ENCODE measurements at regions of chr6 and their contacts with region 1.

Region 1: GRCh38 chr6:83067448-83068413 is at the start of gene DOP1A:
- DNase-seq: peak; percentile 88 to 97 (median 95)
- H3K4me3 ChIP-seq: peak within 1 kb of the TSS; percentile 61 to 100 (median 90)
- H3K27ac ChIP-seq: peak within 1 kb of the TSS in 57 of 59 donors; percentile 37 to 95 (median 85)
- H3K27me3 ChIP-seq: no peaks in the 10 kb centered on the region
- CTCF ChIP-seq: peak; percentile 50 to 100 (median 99)
- total RNA-seq, gene DOP1A: 31.4 to 72.1 (median 53.8) TPM

Region 2: DNA sequence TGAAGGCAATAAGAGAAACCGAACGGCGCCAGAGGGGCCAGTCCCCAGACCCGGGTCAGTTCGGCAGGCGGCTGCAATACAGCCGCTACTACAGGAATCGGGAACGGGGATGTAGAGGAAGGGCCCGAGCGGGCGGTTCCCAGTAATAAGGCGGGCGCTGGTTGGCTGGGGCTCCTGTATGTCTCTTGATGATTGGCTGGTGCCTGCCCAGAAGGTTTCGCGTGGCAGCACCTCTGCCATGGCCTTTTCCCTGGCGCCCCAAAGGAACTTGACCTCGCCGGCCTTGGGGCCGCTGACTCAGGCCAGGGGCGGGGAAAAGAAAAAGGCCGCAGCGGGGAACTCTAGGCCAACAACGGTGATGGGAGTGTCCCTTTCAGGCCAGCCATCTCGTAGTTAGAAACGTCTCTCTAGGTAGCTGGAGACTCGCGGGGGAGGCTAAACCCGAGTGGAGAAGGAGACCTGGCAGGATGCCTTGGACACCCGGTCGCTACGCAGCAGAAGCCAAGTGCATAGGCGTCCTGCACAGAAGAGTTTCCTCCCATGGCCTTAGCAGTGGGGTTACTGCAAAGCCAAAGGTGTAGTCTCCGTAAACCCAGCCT is 820.0 kb before region 1 on chr6 and contains the start of gene IBTK:
- intact Hi-C with region 1: loop called (anchors 5 kb)
- DNase-seq: peak; percentile 93 to 98 (median 96)
- H3K4me3 ChIP-seq: peak within 1 kb of the TSS; percentile 60 to 96 (median 88)
- H3K27ac ChIP-seq: peak within 1 kb of the TSS; percentile 40 to 99 (median 96)
- H3K27me3 ChIP-seq: no peaks in the 10 kb centered on the region
- CTCF ChIP-seq: peak in 18 of 56 donors; percentile 7 to 43 (median 28)
- total RNA-seq, gene IBTK: 24.8 to 47.0 (median 36.3) TPM

Region 3: DNA sequence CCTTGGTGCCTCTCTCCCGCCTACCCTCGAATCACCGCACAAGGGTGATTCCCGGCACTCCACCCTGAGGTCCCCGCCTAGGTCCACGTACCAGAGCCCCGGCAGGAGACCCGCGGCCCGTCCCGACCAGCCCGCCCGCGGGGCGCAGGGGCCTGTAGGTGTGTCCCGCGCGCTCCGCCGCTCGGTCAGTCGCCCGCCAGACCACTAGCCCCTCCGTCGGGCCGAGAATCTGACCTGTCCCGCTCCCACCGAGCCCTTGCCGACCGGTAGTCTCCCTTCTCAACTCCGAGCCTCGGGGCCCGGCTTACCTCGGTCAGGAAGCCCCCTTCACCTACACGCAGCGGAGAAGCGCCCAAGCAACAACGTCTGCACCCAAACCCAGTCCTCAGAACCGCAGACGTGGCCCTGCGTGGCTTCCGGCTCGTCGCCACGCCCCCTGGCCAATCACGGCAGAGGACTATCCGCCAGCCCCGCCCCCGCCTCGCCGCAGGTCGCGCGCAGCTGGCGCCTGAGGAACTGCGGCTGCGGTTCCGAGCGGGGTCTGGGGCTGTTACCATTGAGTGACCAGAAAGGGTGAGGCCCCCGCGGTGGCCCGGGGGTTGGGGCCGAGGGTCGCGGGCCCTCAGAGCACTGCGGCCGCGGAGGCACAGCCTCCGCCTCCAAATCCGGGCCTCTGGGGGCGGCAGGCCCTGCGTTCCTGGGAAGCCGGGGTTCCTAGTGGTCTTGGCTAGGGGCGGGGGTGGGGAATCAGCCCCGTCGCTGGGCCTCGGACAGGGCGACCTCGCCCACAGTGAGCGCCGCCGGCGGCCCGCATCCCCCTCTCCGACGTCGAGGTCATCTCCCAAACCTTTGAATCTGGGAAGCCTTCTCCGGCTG is 125.4 kb after region 1 on chr6 and contains the starts of genes PGM3 and RWDD2A:
- intact Hi-C with region 1: loop called (anchors 5 kb)
- DNase-seq: peak; percentile 85 to 96 (median 91)
- H3K4me3 ChIP-seq: peak within 1 kb of the TSS; percentile 70 to 99 (median 92)
- H3K27ac ChIP-seq: peak within 1 kb of the TSS in 58 of 59 donors; percentile 32 to 93 (median 86)
- H3K27me3 ChIP-seq: no peaks in the 10 kb centered on the region
- CTCF ChIP-seq: peak in 30 of 56 donors; percentile 6 to 54 (median 26)
- total RNA-seq, gene PGM3: 23.6 to 72.4 (median 42.1) TPM
- total RNA-seq, gene RWDD2A: 6.5 to 17.7 (median 12.6) TPM

Region 4: DNA sequence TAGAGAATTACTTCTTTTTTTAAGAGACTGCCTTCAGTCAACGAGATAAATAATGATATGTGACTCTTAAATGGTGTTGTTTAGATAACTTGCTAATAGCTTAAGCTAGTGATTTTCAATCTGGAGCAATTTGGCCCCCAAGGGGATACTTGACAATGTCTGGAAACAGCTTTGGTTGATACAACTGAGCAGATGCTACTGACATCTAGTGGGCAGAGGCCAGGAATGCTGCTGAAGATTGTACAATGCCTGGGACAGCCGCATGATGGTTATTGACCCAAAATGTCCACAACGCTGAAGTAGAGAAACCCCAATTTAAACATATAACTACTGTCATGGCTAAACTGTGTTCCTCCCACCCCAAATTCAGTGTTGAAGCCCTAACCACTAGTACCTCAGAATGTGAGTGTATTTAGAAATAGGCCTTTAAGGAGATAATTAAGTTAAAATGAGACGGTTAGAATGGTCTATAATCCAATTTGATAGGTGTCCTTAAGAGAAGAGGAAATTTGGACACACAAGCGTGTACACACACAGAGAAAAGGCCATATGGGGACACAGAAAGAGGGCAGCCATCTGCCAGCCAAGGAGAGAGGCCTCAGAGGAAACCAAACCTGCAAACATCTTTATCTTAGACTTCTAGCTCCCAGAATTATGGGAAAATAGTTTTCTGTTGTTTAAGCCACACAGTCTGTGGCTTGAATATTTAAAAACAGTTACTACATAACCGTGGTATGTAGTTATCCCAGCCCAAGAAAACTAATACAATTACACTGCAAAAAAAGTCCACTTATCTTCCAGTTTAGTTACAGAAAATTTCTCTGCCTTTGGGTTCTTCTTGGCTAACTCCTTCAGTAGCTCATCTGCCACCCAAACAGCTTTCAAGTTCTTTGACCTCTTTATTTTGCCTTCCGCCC is 147.7 kb after region 1 on chr6:
- intact Hi-C with region 1: loop called (anchors 1 to 2 kb)
- DNase-seq: peak; percentile 25 to 87 (median 64)
- H3K4me3 ChIP-seq: no peak overlapping the region
- H3K27ac ChIP-seq: peak overlapping the region in 3 of 59 donors; percentile 7 to 64 (median 16)
- H3K27me3 ChIP-seq: no peaks in the 10 kb centered on the region
- CTCF ChIP-seq: peak; percentile 45 to 90 (median 84)

Region 5: DNA sequence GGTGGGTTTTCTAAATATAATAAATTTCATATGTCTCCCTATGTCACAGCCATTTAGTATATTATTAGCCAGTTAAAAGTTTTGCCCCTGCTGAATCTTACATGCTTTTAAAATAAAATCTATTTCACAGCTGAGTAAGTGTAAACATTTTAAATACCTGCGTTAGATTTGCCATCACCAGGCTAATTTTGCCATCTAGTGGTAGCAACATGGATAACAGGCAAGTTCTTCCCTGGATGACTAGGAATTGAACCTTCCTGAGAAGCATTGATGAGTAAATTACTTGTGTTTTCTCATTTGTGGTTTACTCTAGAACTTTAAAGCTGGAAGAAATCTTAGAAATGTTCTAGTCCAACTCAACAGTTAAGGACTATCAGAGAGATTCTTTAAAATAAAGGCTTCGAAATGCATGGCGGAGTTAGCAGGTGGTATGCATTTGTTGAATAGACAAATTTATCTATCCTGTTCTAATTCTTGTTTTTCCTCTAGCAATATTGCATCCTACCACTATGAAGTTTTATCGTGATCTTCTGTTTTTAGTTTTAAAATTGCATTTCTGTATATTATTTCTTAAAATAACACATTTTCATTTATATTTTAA is 447.2 kb after region 1 on chr6:
- intact Hi-C with region 1: loop called (anchors 2 kb)
- DNase-seq: peak in 2 of 10 donors; percentile 13 to 29
- H3K4me3 ChIP-seq: no peak overlapping the region
- H3K27ac ChIP-seq: no peak overlapping the region
- H3K27me3 ChIP-seq: no peaks in the 10 kb centered on the region
- CTCF ChIP-seq: peak; percentile 72 to 97 (median 89)

Region 6: GRCh38 chr6:83859410-83860358 is 792.0 kb after region 1 on chr6 and contains the start of gene CYB5R4:
- intact Hi-C with region 1: loop called in 1 of 2 experiments (anchors 10 kb)
- DNase-seq: peak; percentile 87 to 96 (median 92)
- H3K4me3 ChIP-seq: peak within 1 kb of the TSS; percentile 72 to 98 (median 87)
- H3K27ac ChIP-seq: peak within 1 kb of the TSS; percentile 13 to 94 (median 85)
- H3K27me3 ChIP-seq: no peaks in the 10 kb centered on the region
- CTCF ChIP-seq: peak in 53 of 56 donors; percentile 8 to 75 (median 58)
- total RNA-seq, gene CYB5R4: 8.4 to 26.5 (median 18.4) TPM